ENCODE measurements at regions of chr13 and their contacts with region 1.

Region 1: DNA sequence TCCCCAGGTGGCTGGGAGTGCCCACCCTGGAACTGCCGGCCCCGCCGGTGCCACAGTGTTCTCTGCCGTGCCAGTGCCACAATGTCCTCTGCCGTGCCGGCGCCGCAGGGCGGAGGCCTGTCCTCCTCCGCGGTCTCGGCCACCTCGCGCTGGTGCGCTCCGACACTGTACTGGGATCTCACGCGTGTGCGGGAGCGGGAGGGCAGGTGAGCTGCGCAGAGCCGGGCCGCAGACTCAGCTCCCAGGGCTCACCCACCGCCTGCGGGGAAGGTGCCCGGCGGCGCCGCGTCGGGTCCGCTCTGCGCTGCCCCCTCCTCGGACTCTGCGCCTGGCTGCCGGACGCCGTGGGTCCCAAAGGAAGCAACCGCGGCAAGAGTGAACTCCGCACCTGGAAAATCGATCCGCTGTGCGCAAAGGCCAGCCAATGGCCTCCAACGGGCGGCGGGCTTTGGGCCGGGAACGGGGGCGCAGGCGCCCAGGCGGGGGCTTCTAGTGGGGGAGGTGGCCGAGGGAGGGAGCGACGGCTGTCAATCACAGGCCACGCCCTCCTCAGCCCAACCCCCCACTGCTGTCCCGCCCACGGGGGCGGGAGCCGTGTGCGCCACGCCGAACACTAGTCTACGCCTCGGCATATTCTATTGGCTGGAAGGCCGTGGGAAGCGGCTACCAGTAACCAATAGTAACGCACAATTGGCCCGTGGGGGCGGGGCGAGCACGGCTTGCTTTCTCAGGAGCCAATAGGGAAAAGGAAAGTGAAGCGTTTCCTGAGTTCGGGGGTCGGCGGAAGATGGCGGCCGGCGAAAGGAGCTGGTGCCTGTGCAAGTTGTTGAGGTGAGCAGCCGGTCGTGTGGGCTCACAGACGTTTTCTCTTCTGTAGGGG is at the start of gene ALG11:
- DNase-seq: peak; percentile 98 to 100 (median 99)
- ATAC-seq: peak; percentile 100
- H3K4me3 ChIP-seq: peak within 1 kb of the TSS; percentile 92
- H3K4me3 Mint-ChIP-seq: peak within 1 kb of the TSS; percentile 90 to 100 (median 99)
- H3K27ac ChIP-seq: peak within 1 kb of the TSS; percentile 76
- H3K27ac Mint-ChIP-seq: peak within 1 kb of the TSS; percentile 88 to 99 (median 95)
- H3K4me1 ChIP-seq: peaks cover 9 to 16% of the 10 kb centered on the region in 2 donors
- H3K4me1 Mint-ChIP-seq: peaks cover 19 to 45% (median 29%) of the 10 kb centered on the region in 7 donors
- H3K27me3 ChIP-seq: no peaks in the 10 kb centered on the region
- H3K27me3 Mint-ChIP-seq: peaks cover 14 to 38% (median 23%) of the 10 kb centered on the region in 5 donors
- total RNA-seq, gene ALG11: 29.3 to 45.6 (median 38.3) TPM

Region 2: DNA sequence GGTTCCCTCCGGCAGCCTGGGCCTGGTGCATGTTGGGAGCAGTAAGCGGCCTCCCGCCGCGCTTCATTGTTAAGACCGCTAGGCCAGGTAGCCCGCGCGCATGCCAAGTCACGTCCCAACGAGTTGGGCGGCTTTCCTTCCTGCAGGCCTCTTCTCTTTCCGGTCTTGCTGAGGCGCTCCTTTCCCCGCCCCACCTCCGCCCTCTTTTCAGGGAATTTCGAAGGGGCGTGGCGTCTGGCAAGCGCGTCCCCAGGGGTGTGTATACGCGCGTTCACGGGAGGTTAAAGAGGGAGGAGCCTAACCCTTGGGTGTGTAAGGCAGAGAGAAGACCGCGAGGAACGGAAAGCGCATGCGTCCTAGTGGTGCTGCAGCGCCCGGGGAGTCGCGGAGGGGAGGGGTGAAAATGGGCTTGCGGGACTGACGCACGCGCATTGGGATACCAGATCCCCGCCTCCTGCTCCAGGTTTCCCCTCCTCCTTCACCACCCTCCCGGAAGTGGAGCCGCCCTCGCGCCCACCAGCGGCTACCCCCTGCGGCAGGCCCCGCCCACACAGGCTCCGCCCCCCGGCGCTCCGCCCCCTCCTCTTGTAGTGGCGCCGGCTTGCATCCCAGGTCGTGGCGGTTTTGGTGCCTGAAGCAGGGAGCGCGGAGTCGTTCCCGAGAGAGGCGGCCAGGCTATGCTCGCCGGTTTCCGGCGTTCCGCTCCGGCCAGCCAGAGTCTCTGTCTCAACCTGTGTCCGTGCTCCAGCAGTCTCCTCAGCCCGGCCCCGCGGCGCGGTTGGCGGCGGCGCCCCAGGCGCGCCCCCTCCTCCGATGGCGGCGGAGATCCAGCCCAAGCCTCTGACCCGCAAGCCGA is 427.8 kb before region 1 on chr13 and contains the start of gene WDFY2:
- CTCF ChIA-PET with region 1: no interaction called
- POLR2A ChIA-PET with region 1: no interaction called
- intact Hi-C with region 1: loop called in 1 of 2 experiments (anchors 1 kb)
- DNase-seq: peak; percentile 99 to 100 (median 100)
- ATAC-seq: peak; percentile 92
- H3K4me3 ChIP-seq: peak within 1 kb of the TSS; percentile 95
- H3K4me3 Mint-ChIP-seq: peak within 1 kb of the TSS; percentile 85 to 100 (median 98)
- H3K27ac ChIP-seq: peak within 1 kb of the TSS; percentile 88
- H3K27ac Mint-ChIP-seq: peak within 1 kb of the TSS; percentile 95 to 100 (median 98)
- H3K4me1 ChIP-seq: peaks cover 12 to 17% of the 10 kb centered on the region in 2 donors
- H3K4me1 Mint-ChIP-seq: peaks cover 26 to 47% (median 35%) of the 10 kb centered on the region in 7 donors
- H3K27me3 ChIP-seq: no peaks in the 10 kb centered on the region
- H3K27me3 Mint-ChIP-seq: peaks cover 0 to 3% (median 0%) of the 10 kb centered on the region in 5 donors
- total RNA-seq, gene WDFY2: 13.3 to 44.3 (median 21.1) TPM

Region 3: GRCh38 chr13:51825165-51825592 is 186.7 kb before region 1 on chr13:
- CTCF ChIA-PET with region 1: no interaction called
- POLR2A ChIA-PET with region 1: interaction called, 3 read pairs
- intact Hi-C with region 1: loop called in 1 of 2 experiments (anchors 5 kb)
- DNase-seq: peak in 7 of 9 donors; percentile 62 to 90 (median 84)
- ATAC-seq: peak; percentile 81
- H3K4me3 ChIP-seq: peak overlapping the region; percentile 75
- H3K4me3 Mint-ChIP-seq: peak overlapping the region; percentile 62 to 100 (median 97)
- H3K27ac ChIP-seq: peak overlapping the region; percentile 85
- H3K27ac Mint-ChIP-seq: peak overlapping the region; percentile 86 to 99 (median 95)
- H3K4me1 ChIP-seq: peaks cover 61 to 78% of the 10 kb centered on the region in 2 donors
- H3K4me1 Mint-ChIP-seq: peaks cover 57 to 80% (median 63%) of the 10 kb centered on the region in 7 donors
- H3K27me3 ChIP-seq: no peaks in the 10 kb centered on the region
- H3K27me3 Mint-ChIP-seq: peaks cover 0 to 10% (median 0%) of the 10 kb centered on the region in 5 donors

Region 4: DNA sequence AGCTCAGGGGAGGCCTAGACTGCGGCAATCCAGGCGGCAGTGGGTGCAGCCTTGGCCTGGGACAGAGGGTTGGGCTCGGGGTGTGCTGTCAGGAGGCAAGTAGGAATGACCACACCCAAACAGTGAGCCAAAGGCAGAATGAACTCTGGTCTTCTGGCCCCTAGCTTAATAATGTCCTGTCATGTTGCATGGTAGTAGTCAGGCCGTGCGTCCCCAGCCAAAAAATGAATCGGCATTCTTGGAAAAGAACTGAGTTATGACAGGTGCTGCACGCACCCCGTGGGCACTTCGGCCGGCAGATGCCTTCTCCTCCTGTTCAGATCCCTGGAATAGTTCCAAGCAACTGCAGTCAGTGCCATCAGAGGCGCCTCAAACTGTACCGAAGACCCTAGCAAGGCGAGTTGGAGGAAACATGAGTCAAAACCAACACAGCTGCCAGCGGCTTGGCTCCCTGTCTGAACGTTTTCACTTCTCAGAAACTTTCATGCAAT is 56.5 kb before region 1 on chr13:
- CTCF ChIA-PET with region 1: no interaction called
- POLR2A ChIA-PET with region 1: no interaction called
- intact Hi-C with region 1: loop called in 1 of 2 experiments (anchors 2 kb)
- DNase-seq: no peak
- ATAC-seq: no peak
- H3K4me3 ChIP-seq: no peak overlapping the region
- H3K4me3 Mint-ChIP-seq: no peak overlapping the region
- H3K27ac ChIP-seq: no peak overlapping the region
- H3K27ac Mint-ChIP-seq: no peak overlapping the region
- H3K4me1 ChIP-seq: peaks cover 3 to 34% of the 10 kb centered on the region in 2 donors
- H3K4me1 Mint-ChIP-seq: peaks cover 30 to 58% (median 51%) of the 10 kb centered on the region in 7 donors
- H3K27me3 ChIP-seq: no peaks in the 10 kb centered on the region
- H3K27me3 Mint-ChIP-seq: peaks cover 0 to 8% (median 0%) of the 10 kb centered on the region in 5 donors

Region 5: GRCh38 chr13:51981360-51981759 is 30.5 kb before region 1 on chr13:
- CTCF ChIA-PET with region 1: no interaction called
- POLR2A ChIA-PET with region 1: no interaction called
- intact Hi-C with region 1: no loop called
- DNase-seq: no peak
- ATAC-seq: no peak
- H3K4me3 ChIP-seq: no peak overlapping the region
- H3K4me3 Mint-ChIP-seq: no peak overlapping the region
- H3K27ac ChIP-seq: no peak overlapping the region
- H3K27ac Mint-ChIP-seq: no peak overlapping the region
- H3K4me1 ChIP-seq: no peaks in the 10 kb centered on the region
- H3K4me1 Mint-ChIP-seq: peaks cover 0 to 4% (median 0%) of the 10 kb centered on the region in 7 donors
- H3K27me3 ChIP-seq: no peaks in the 10 kb centered on the region
- H3K27me3 Mint-ChIP-seq: peaks cover 0 to 23% (median 0%) of the 10 kb centered on the region in 5 donors

Region 6: DNA sequence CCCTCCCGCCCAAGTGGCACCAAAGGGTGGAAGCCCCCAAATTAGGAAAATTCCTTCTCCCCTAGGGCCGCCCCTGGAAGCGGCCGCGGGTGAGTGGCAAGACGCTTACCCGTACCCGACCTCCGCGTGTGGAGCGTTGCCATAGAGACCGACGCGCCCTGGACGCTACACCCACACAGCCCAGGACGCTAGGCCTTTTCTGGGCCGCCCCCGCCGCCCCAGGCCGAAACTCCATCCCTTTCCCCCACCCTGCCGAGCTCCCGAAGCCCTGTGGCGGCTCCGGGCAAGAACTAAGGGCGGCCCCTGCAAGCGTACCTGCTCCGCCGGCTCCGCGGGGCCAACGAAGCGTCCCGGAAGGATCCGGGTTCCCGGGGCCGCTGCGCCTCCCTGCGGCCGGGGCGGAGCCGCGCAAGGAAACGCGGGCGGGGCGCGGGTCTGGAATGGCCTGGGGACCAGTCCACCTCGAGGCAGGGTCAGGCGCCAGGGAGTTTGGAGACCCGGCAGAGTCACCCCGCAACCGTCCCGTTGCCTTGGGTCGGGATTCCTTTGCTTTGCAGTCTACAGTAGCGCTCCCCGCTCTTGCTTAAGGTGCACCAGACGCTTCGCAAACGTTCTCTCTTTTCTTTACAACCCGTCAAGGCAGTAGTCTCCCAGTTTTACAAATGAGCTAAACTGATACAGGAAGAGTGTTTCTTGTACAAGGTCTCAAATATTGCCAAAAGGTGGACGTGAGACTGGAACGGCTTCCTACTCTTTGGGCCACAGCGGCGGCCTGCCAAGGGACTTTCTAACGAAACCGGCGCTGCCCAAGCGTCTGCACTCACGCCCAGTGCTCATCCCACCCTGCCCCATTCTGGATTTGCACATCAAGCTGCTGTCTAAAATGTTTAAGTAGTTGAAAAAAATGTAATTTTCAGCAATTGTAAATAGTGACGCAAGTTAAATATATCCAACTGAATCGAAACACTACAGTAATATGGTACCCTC is 117.1 kb after region 1 on chr13 and contains the start of gene NEK5:
- CTCF ChIA-PET with region 1: interaction called, 4 read pairs
- POLR2A ChIA-PET with region 1: no interaction called
- intact Hi-C with region 1: loop called in 1 of 2 experiments (anchors 1 kb)
- DNase-seq: peak; percentile 36 to 75 (median 55)
- ATAC-seq: peak; percentile 82
- H3K4me3 ChIP-seq: peak within 1 kb of the TSS; percentile 51
- H3K4me3 Mint-ChIP-seq: peak within 1 kb of the TSS; percentile 85 to 94 (median 88)
- H3K27ac ChIP-seq: no peak within 1 kb of the TSS
- H3K27ac Mint-ChIP-seq: peak within 1 kb of the TSS in 4 of 9 donors; percentile 3 to 19 (median 6)
- H3K4me1 ChIP-seq: peaks cover 11 to 13% of the 10 kb centered on the region in 2 donors
- H3K4me1 Mint-ChIP-seq: peaks cover 11 to 21% (median 18%) of the 10 kb centered on the region in 7 donors
- H3K27me3 ChIP-seq: no peaks in the 10 kb centered on the region
- H3K27me3 Mint-ChIP-seq: peaks cover 0 to 14% (median 6%) of the 10 kb centered on the region in 5 donors
- total RNA-seq, gene NEK5: not detected

Region 7: GRCh38 chr13:52405767-52406494 is 394.1 kb after region 1 on chr13 and contains the start of gene THSD1:
- CTCF ChIA-PET with region 1: no interaction called
- POLR2A ChIA-PET with region 1: no interaction called
- intact Hi-C with region 1: loop called in 1 of 2 experiments (anchors 5 kb)
- DNase-seq: peak in 2 of 9 donors; percentile 12 to 24
- ATAC-seq: peak; percentile 57
- H3K4me3 ChIP-seq: peak within 1 kb of the TSS; percentile 38
- H3K4me3 Mint-ChIP-seq: peak within 1 kb of the TSS; percentile 64 to 84 (median 72)
- H3K27ac ChIP-seq: no peak within 1 kb of the TSS
- H3K27ac Mint-ChIP-seq: no peak within 1 kb of the TSS
- H3K4me1 ChIP-seq: peaks cover 7 to 18% of the 10 kb centered on the region in 2 donors
- H3K4me1 Mint-ChIP-seq: peaks cover 10 to 30% (median 20%) of the 10 kb centered on the region in 7 donors
- H3K27me3 ChIP-seq: no peaks in the 10 kb centered on the region
- H3K27me3 Mint-ChIP-seq: peaks cover 26 to 40% (median 33%) of the 10 kb centered on the region in 5 donors
- total RNA-seq, gene THSD1: 0.22 to 0.54 (median 0.29) TPM

Region 8: GRCh38 chr13:52652196-52652979 is 640.5 kb after region 1 on chr13 and contains the start of gene SUGT1:
- CTCF ChIA-PET with region 1: no interaction called
- POLR2A ChIA-PET with region 1: interaction called, 4 read pairs
- intact Hi-C with region 1: loop called (anchors 1 kb)
- DNase-seq: peak; percentile 90 to 97 (median 95)
- ATAC-seq: peak; percentile 96
- H3K4me3 ChIP-seq: peak within 1 kb of the TSS; percentile 87
- H3K4me3 Mint-ChIP-seq: no peak within 1 kb of the TSS
- H3K27ac ChIP-seq: peak within 1 kb of the TSS; percentile 94
- H3K27ac Mint-ChIP-seq: no peak within 1 kb of the TSS
- H3K4me1 ChIP-seq: peaks cover 17 to 22% of the 10 kb centered on the region in 2 donors
- H3K4me1 Mint-ChIP-seq: peaks cover 6 to 18% (median 13%) of the 10 kb centered on the region in 7 donors
- H3K27me3 ChIP-seq: no peaks in the 10 kb centered on the region
- H3K27me3 Mint-ChIP-seq: no peaks in the 10 kb centered on the region
- total RNA-seq, gene SUGT1: 21.3 to 49.0 (median 33.8) TPM

Measured in naive thymus-derived CD4-positive, alpha-beta T cell (primary cell).